ENCODE measurements at regions of chrX and their contacts with region 1.

Region 1: GRCh38 chrX:118437283-118437682 is 58.3 kb upstream of the DOCK11 start:
- DNase-seq: no peak
- ATAC-seq: no peak
- H3K4me3 ChIP-seq: no peak overlapping the region
- H3K27ac ChIP-seq: no peak overlapping the region
- H3K4me1 ChIP-seq: no peaks in the 10 kb centered on the region
- H3K27me3 ChIP-seq: no peaks in the 10 kb centered on the region
- CTCF ChIP-seq: no peak
- EP300 ChIP-seq: no peak
- POLR2A ChIP-seq: no peak
- RAD21 ChIP-seq: no peak

Region 2: DNA sequence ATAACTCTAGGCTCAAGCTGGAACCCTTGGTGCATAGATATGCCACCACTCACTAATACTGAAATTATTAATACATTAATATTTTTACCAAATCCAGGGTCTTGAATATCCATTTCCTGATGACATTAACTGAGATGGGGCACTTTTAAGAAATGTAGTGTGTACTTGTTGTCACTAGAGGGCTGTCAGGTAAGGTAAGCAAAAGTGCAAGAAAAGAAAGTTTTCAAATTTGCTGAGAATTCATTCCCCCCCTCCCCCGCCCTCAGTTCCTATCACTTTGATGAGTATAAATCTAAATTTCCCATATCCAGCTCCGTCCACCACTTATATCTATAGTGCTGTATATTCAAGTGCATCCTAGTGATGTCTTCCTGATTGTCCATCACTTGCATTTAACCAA is 111.8 kb before region 1 on chrX:
- CTCF ChIA-PET with region 1: no interaction called
- POLR2A ChIA-PET with region 1: no interaction called
- in situ Hi-C with region 1: no loop called
- intact Hi-C with region 1: loop called (anchors 5 kb)
- DNase-seq: peak; percentile 14 to 29 (median 20)
- ATAC-seq: peak; percentile 44; the same call in 2 of the 3 replicates
- H3K4me3 ChIP-seq: no peak overlapping the region
- H3K27ac ChIP-seq: no peak overlapping the region
- H3K4me1 ChIP-seq: peaks cover 0 to 7% of the 10 kb centered on the region in 2 experiments; a peak in 3 of 5 replicates
- H3K27me3 ChIP-seq: no peaks in the 10 kb centered on the region
- CTCF ChIP-seq: peak; percentile 20 to 38 (median 34); a peak in 2 of 6 replicates
- EP300 ChIP-seq: no peak
- POLR2A ChIP-seq: no peak
- RAD21 ChIP-seq: peak in 1 of 2 experiments; percentile 39; a peak in 2 of 4 replicates